ENCODE measurements at regions of chr17 and their contacts with region 1.

Region 1: GRCh38 chr17:40479533-40480480 is 21.6 kb downstream of the TNS4 start:
- DNase-seq: no peak
- H3K4me3 ChIP-seq: no peak overlapping the region
- H3K27ac ChIP-seq: no peak overlapping the region; the same call in 1 of the 2 replicates
- H3K4me1 ChIP-seq: peaks cover 3 to 22% (median 11%) of the 10 kb centered on the region in 4 experiments
- H3K27me3 ChIP-seq: no peaks in the 10 kb centered on the region; a peak in 2 of 7 replicates
- CTCF ChIP-seq: no peak
- EP300 ChIP-seq: no peak
- POLR2A ChIP-seq: no peak
- RAD21 ChIP-seq: no peak

Region 2: DNA sequence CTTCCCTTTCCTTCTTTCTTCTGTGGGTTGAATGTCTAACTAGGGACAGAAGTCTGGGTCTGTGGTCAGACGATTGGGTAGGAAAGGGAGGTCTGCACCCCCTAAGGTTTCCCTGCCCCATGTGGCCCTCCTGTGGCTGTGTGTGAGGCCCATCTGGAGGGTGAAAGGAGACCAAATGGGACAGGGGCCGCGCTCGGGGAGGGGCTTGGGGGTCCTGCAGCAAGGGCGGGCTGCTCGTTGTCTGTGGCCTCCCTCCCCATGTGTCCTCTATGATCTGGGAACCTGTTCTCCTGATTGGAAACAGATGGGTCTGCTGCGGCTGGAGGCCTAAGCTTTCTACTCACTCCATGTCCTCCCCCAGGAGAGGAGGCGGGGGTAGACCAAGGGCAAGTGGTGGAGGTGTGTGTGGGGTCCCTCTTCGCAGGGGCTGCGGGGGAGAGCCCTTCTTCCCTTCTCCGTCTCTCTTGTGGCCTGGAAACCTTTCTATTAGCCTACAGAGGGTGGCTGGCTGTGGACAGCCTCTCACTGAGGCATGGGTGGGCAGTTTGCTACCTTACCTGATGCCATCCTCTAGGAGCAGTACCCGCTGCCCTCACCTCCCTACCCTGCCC is 18.0 kb before region 1 on chr17:
- CTCF ChIA-PET with region 1: interaction called, 739 read pairs
- POLR2A ChIA-PET with region 1: interaction called, 11 read pairs
- DNase-seq: no peak
- H3K4me3 ChIP-seq: no peak overlapping the region
- H3K27ac ChIP-seq: no peak overlapping the region
- H3K4me1 ChIP-seq: peaks cover 2 to 39% (median 16%) of the 10 kb centered on the region in 4 experiments
- H3K27me3 ChIP-seq: no peaks in the 10 kb centered on the region
- CTCF ChIP-seq: no peak
- EP300 ChIP-seq: no peak
- POLR2A ChIP-seq: no peak
- RAD21 ChIP-seq: no peak